Naive thymus-derived CD8-positive, alpha-beta T cell (primary cell): ENCODE measurements at regions of chr7 and their contacts with region 1.

Region 1: GRCh38 chr7:144835652-144836544 is at the start of gene TPK1:
- DNase-seq: peak; percentile 81 to 94 (median 89)
- ATAC-seq: peak; percentile 79 to 90
- H3K4me3 Mint-ChIP-seq: peak within 1 kb of the TSS; percentile 91 to 99 (median 98)
- H3K27ac Mint-ChIP-seq: peak within 1 kb of the TSS; percentile 98 to 99 (median 99)
- H3K4me1 Mint-ChIP-seq: peaks cover 9 to 44% (median 38%) of the 10 kb centered on the region in 4 donors
- H3K27me3 Mint-ChIP-seq: no peaks in the 10 kb centered on the region
- polyA plus RNA-seq, gene TPK1: 26.1 to 26.6 (median 26.2) TPM

Region 2: DNA sequence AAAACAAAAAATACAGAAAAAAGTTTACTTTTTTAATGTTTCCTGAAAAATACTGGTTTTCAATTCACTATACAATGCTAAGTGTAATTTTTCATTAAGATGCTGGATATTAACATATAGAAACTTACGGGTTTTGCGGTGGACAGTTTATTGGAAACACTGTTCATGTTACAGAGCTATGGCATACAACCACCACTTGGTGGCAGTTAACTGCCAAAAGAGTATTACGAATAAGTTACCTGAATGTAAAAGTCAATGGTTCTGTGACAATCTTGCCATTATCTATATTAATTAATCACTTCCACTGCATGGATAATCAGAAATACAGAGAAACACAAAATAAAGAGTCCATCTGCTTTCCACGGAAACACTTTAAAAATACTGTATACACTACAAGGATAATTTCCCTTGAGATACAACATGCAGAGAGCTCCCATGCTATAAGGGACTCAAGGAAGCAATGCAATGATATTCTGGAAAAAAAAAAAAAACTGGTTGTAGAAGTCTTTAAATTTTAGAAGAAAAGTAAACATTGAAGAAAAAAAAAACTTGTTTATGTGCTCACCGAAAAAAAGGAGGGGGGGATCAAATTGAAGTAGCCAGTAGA is 97.1 kb before region 1 on chr7:
- POLR2A ChIA-PET with region 1: interaction called, 30 read pairs
- DNase-seq: peak in 7 of 10 donors; percentile 6 to 61 (median 34)
- ATAC-seq: peak; percentile 66 to 74
- H3K4me3 Mint-ChIP-seq: no peak overlapping the region
- H3K27ac Mint-ChIP-seq: no peak overlapping the region
- H3K4me1 Mint-ChIP-seq: peaks cover 6 to 19% (median 9%) of the 10 kb centered on the region in 4 donors
- H3K27me3 Mint-ChIP-seq: no peaks in the 10 kb centered on the region

Region 3: DNA sequence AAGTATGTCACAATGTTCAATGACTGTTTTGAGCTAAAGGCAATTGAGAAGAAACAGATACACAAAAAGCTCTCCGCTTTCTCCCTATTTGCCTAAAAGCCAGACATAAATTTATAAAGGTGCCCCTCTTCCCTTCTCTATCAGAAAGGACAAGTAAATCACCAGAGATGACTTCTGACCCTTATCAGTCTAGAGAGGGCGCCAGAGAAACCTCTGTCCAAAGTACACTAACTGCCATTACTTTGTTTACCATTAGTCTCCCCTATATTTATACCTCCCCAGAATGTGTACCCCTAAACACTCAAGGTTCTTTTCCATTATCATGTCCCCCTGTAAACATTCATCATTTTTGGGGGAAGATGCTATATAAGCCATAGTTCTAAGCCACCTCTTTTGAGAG is 49.4 kb before region 1 on chr7:
- POLR2A ChIA-PET with region 1: interaction called, 41 read pairs
- DNase-seq: peak in 1 of 10 donors; percentile 10
- ATAC-seq: no peak
- H3K4me3 Mint-ChIP-seq: no peak overlapping the region
- H3K27ac Mint-ChIP-seq: no peak overlapping the region
- H3K4me1 Mint-ChIP-seq: peaks cover 8 to 31% (median 16%) of the 10 kb centered on the region in 4 donors
- H3K27me3 Mint-ChIP-seq: no peaks in the 10 kb centered on the region

Region 4: GRCh38 chr7:144805627-144806239 is 30.2 kb before region 1 on chr7:
- POLR2A ChIA-PET with region 1: interaction called, 104 read pairs
- DNase-seq: no peak
- ATAC-seq: no peak
- H3K4me3 Mint-ChIP-seq: no peak overlapping the region
- H3K27ac Mint-ChIP-seq: peak overlapping the region in 5 of 10 donors; percentile 14 to 66 (median 37)
- H3K4me1 Mint-ChIP-seq: peaks cover 29 to 56% (median 48%) of the 10 kb centered on the region in 4 donors
- H3K27me3 Mint-ChIP-seq: no peaks in the 10 kb centered on the region

Region 5: GRCh38 chr7:144818511-144818910 is 17.4 kb before region 1 on chr7:
- POLR2A ChIA-PET with region 1: interaction called, 307 read pairs
- DNase-seq: peak; percentile 16 to 81 (median 62)
- ATAC-seq: peak; percentile 96 to 98
- H3K4me3 Mint-ChIP-seq: peak overlapping the region; percentile 46 to 76 (median 60)
- H3K27ac Mint-ChIP-seq: peak overlapping the region; percentile 92 to 98 (median 94)
- H3K4me1 Mint-ChIP-seq: peaks cover 44 to 81% (median 74%) of the 10 kb centered on the region in 4 donors
- H3K27me3 Mint-ChIP-seq: no peaks in the 10 kb centered on the region

Region 6: GRCh38 chr7:145104400-145104799 is 268.5 kb after region 1 on chr7:
- POLR2A ChIA-PET with region 1: no interaction called
- DNase-seq: no peak
- ATAC-seq: no peak
- H3K4me3 Mint-ChIP-seq: no peak overlapping the region
- H3K27ac Mint-ChIP-seq: no peak overlapping the region
- H3K4me1 Mint-ChIP-seq: no peaks in the 10 kb centered on the region
- H3K27me3 Mint-ChIP-seq: peaks cover 3 to 12% (median 3%) of the 10 kb centered on the region in 5 donors